Activated CD4-positive, alpha-beta T cell treated with anti-CD3 and anti-CD28 coated beads for 36 hours (primary cell): ENCODE measurements at regions of chr5 and their contacts with region 1.

Region 1: DNA sequence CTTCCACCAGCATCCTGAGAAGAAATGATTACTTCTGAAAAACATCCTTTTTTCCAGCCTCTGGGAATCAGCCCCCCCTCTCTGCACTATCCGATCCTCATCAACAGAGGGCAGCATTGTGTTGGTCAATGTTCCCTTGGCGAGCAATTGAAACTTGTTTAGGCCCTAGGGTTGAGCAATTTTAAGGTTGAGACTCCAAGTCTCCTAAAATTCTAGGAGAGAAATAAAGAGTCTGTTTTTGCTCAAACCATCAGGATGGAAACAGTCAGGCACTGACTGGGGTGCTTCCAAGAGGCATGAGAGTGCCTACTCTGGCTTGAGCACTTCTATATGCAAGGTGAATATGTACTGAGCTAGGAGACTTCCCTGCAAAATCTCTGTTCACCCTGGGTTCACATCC is 12.4 kb upstream of the CYFIP2 start:
- DNase-seq: no peak
- ATAC-seq: no peak
- H3K4me3 Mint-ChIP-seq: peak overlapping the region; percentile 10
- H3K27ac Mint-ChIP-seq: peak overlapping the region; percentile 89
- H3K4me1 Mint-ChIP-seq: peaks cover 96% of the 10 kb centered on the region
- H3K27me3 Mint-ChIP-seq: no peaks in the 10 kb centered on the region

Region 2: GRCh38 chr5:157142317-157143126 is 111.0 kb before region 1 on chr5 and contains the start of gene MED7:
- CTCF ChIA-PET with region 1: interaction called, 31 read pairs
- POLR2A ChIA-PET with region 1: interaction called, 5 read pairs
- intact Hi-C with region 1: no loop called
- DNase-seq: peak; percentile 95
- ATAC-seq: peak; percentile 98
- H3K4me3 Mint-ChIP-seq: peak within 1 kb of the TSS; percentile 84
- H3K27ac Mint-ChIP-seq: peak within 1 kb of the TSS; percentile 99
- H3K4me1 Mint-ChIP-seq: peaks cover 46% of the 10 kb centered on the region
- H3K27me3 Mint-ChIP-seq: no peaks in the 10 kb centered on the region
- total RNA-seq, gene MED7: 10.0 to 16.9 TPM

Region 3: GRCh38 chr5:157167214-157167621 is 86.3 kb before region 1 on chr5:
- CTCF ChIA-PET with region 1: interaction called, 10 read pairs
- POLR2A ChIA-PET with region 1: interaction called, 5 read pairs
- intact Hi-C with region 1: no loop called
- DNase-seq: no peak
- ATAC-seq: peak; percentile 74
- H3K4me3 Mint-ChIP-seq: peak overlapping the region; percentile 47
- H3K27ac Mint-ChIP-seq: peak overlapping the region; percentile 88
- H3K4me1 Mint-ChIP-seq: peaks cover 76% of the 10 kb centered on the region
- H3K27me3 Mint-ChIP-seq: no peaks in the 10 kb centered on the region

Region 4: GRCh38 chr5:157189223-157189622 is 64.3 kb before region 1 on chr5:
- CTCF ChIA-PET with region 1: interaction called, 8 read pairs
- POLR2A ChIA-PET with region 1: no interaction called
- intact Hi-C with region 1: loop called in 1 of 2 experiments (anchors 2 kb)
- DNase-seq: peak; percentile 71
- ATAC-seq: peak; percentile 59
- H3K4me3 Mint-ChIP-seq: peak overlapping the region; percentile 93
- H3K27ac Mint-ChIP-seq: peak overlapping the region; percentile 96
- H3K4me1 Mint-ChIP-seq: peaks cover 75% of the 10 kb centered on the region
- H3K27me3 Mint-ChIP-seq: no peaks in the 10 kb centered on the region

Region 5: GRCh38 chr5:157225469-157226422 is 27.8 kb before region 1 on chr5:
- CTCF ChIA-PET with region 1: interaction called, 10 read pairs
- POLR2A ChIA-PET with region 1: interaction called, 3 read pairs
- intact Hi-C with region 1: loop called (anchors 1 kb)
- DNase-seq: no peak
- ATAC-seq: peak; percentile 30
- H3K4me3 Mint-ChIP-seq: peak overlapping the region; percentile 77
- H3K27ac Mint-ChIP-seq: peak overlapping the region; percentile 96
- H3K4me1 Mint-ChIP-seq: peaks cover 73% of the 10 kb centered on the region
- H3K27me3 Mint-ChIP-seq: no peaks in the 10 kb centered on the region

Region 6: DNA sequence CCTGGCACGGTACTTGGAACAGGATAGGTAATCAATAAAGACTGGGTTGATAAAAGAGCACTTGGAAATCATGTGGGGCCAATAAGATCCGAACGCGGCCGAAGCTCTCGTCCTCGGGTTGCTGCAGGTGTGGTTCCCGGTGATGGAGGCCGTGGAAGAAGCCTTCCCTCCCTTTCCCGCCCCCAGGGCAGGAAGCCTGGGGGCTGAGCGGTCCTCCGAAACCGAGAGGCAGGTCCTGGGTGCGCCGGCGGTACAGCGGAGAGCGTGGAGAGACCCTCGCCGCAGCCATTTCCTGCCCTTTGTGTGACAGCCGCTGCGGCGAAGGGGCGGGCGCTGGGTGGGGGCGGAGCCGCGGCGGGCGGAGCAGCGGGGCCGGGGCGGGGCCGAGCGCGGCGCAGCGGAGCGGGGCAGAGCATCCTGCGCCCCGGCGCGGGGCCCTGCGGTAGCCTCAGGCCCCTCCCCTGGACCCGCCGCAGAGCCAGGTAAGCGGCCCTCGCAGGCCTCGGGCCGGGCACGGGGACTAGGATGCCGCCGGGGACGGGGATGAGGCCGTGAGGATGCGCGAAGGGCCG is 12.3 kb after region 1 on chr5 and contains the start of gene CYFIP2:
- CTCF ChIA-PET with region 1: interaction called, 33 read pairs
- POLR2A ChIA-PET with region 1: interaction called, 4 read pairs
- intact Hi-C with region 1: loop called in 1 of 2 experiments (anchors 1 kb)
- DNase-seq: peak; percentile 91
- ATAC-seq: peak; percentile 78
- H3K4me3 Mint-ChIP-seq: peak within 1 kb of the TSS; percentile 96
- H3K27ac Mint-ChIP-seq: peak within 1 kb of the TSS; percentile 98
- H3K4me1 Mint-ChIP-seq: peaks cover 68% of the 10 kb centered on the region
- H3K27me3 Mint-ChIP-seq: no peaks in the 10 kb centered on the region
- total RNA-seq, gene CYFIP2: 277 to 526 TPM

Region 7: DNA sequence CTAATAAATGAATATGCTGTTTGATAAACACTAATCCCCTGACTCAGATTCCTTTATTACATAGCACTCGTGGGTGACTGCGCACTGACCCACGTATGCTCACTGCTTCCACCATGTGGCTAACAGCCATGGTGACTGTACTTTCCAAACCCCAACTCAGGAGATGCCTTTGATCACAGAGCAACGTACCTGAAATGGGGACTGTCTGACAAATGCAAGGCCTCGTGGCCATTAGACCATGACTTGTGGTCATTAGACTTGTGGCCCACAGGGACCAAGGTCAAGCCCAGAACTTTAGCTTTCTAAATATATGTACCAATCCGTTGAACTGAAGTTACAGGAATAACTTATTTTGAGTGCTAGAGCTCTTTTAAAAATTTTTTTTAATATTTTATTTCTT is 58.9 kb after region 1 on chr5:
- CTCF ChIA-PET with region 1: interaction called, 26 read pairs
- POLR2A ChIA-PET with region 1: no interaction called
- intact Hi-C with region 1: loop called (anchors 1 kb)
- DNase-seq: peak; percentile 76
- ATAC-seq: peak; percentile 95
- H3K4me3 Mint-ChIP-seq: no peak overlapping the region
- H3K27ac Mint-ChIP-seq: peak overlapping the region; percentile 83
- H3K4me1 Mint-ChIP-seq: peaks cover 36% of the 10 kb centered on the region
- H3K27me3 Mint-ChIP-seq: no peaks in the 10 kb centered on the region

Region 8: DNA sequence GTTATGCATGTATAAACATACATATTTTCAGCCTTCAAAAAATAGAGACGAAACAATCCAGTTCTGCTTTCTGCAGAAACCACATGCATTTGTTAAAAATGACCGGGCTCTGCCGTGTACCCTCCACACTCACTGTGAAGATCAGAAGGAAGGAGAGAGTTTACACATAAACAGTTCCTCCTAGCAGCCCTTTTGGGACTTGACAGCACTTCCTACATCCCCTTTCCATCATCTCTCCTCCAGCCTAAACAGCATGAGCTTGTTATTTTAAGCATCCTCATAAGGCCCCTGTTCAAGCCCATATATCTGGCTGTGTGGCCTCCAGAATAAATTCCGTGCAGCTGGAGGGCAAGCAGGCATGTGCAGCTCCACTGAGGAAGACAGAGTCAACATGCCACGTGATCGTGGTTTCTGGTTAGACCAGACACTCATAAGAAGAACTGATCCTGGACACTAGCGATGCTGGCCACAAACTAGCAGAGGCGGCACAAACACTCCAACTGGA is 248.6 kb after region 1 on chr5:
- CTCF ChIA-PET with region 1: no interaction called
- POLR2A ChIA-PET with region 1: no interaction called
- intact Hi-C with region 1: no loop called
- DNase-seq: no peak
- ATAC-seq: no peak
- H3K4me3 Mint-ChIP-seq: no peak overlapping the region
- H3K27ac Mint-ChIP-seq: no peak overlapping the region
- H3K4me1 Mint-ChIP-seq: peaks cover 11% of the 10 kb centered on the region
- H3K27me3 Mint-ChIP-seq: no peaks in the 10 kb centered on the region